Head of caudate nucleus (tissue), 42 donors: ENCODE measurements at regions of chr1 and their contacts with region 1.

Region 1: DNA sequence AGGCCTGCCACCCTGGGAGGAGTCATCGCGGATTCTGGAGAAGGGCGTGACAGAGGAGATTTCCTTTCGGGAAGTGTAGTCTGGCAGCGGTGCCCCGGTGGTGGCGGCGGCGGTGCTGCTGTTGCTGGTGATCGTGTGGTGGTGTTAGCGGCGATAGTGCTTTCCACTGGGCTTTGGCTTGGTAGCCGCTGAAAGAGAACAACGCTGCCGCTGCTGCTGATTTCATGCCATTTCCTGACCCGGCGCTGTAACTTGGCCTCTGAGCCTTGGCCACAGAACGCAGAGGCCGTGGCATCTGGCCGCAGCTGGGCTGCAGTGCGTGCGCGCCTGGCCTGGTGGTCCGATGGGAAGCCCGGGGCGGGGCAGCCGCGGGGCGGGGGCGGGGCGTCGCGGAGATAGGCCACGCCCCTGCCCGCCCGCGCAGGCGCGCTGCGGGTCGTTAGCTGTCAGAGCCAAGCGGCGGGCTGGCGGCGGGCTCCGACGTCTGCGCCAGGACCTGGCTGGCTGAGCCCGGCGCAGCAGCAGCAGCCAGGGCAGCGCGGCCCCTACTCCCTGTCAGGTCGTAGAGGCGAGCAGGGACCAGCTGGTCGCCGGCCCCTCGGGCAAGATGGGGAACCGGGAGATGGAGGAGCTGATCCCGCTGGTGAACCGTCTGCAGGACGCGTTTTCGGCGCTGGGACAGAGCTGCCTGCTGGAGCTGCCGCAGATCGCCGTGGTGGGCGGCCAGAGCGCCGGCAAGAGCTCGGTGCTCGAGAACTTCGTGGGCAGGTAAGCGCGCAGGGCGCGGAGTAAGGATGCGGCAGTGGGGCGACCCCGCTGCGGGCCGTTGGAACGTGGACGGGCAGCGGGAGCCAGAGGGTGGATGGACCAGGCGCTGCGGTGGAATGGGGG is at the start of gene DNM3:
- DNase-seq: peak; percentile 81 to 97 (median 94)

Region 2: GRCh38 chr1:171654942-171655745 is 186.2 kb before region 1 on chr1:
- intact Hi-C with region 1: no loop called
- DNase-seq: peak in 34 of 42 donors; percentile 16 to 78 (median 45)

Region 3: DNA sequence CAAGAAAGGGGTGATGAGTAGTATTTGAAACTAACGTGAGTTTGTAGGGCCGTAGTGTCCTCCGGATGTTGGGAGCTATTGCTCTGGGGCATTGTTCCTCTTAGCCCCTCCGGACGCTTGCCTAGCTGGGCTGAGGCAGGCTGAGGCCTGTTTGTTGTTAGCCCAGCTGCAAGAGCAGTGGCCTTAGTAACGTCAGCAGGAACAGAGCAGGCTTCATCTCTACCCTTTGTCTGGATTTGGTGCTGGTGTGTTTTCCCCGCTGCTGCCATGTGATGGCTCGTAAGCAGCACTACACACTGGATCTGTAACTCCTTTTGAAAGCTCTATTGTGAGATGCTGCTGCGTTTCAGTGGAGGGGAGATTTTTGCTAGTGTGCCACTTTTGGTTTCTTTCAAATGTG is 57.6 kb after region 1 on chr1:
- intact Hi-C with region 1: loop called (anchors 5 kb)
- DNase-seq: peak; percentile 66 to 95 (median 86)

Region 4: DNA sequence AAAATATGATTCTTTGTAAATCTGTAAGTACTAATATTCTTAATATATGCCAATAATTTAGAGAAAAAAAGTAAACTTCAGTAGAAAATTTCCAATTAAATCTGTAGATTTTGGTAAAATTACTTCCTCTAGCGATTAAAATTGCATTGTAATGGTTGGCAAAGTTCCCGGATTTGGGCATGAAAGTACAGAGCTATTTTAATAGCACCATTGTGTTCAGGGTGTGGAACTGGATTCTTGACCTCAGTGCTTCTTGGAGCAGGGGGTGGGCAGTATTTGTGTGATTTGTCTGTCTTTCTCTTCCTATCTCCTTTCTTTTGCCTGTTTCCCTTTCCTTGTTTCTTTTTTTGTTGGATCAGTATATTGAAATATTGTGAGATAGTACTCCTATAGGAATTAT is 72.1 kb after region 1 on chr1:
- intact Hi-C with region 1: loop called (anchors 5 kb)
- DNase-seq: peak in 27 of 42 donors; percentile 14 to 82 (median 46)